ENCODE measurements at regions of chr12 and their contacts with region 1.

Region 1: DNA sequence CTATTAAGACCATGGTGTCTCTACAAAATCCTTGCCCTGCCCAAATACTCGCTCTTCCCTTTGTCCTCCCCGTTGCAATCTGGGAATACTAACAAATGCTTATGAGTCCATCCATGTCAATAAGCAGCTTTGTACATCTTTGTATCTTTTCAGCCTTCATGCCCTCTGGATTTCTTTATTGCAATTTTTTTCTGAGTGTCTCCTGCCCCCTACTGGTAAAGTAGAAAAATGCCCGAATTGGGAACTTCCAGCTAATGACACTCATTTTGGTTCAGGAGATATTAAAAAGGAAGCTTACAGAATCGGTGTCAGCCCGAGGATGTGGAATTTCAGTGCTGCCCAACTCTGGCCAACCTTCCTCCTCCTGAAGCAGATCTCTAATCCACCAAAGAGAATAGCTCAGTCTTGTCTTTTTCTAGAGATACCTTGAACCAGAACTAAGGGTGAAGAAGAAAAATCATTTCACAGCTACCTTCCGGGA is 46.0 kb downstream of the SH2B3 start:
- DNase-seq: peak; percentile 26
- H3K27ac ChIP-seq: no peak overlapping the region
- CTCF ChIP-seq: peak; percentile 75

Region 2: GRCh38 chr12:111330800-111331752 is 120.6 kb before region 1 on chr12:
- CTCF ChIA-PET with region 1: interaction called, 12 read pairs
- POLR2A ChIA-PET with region 1: interaction called, 3 read pairs
- DNase-seq: peak; percentile 59
- H3K27ac ChIP-seq: no peak overlapping the region
- CTCF ChIP-seq: peak; percentile 51

Region 3: DNA sequence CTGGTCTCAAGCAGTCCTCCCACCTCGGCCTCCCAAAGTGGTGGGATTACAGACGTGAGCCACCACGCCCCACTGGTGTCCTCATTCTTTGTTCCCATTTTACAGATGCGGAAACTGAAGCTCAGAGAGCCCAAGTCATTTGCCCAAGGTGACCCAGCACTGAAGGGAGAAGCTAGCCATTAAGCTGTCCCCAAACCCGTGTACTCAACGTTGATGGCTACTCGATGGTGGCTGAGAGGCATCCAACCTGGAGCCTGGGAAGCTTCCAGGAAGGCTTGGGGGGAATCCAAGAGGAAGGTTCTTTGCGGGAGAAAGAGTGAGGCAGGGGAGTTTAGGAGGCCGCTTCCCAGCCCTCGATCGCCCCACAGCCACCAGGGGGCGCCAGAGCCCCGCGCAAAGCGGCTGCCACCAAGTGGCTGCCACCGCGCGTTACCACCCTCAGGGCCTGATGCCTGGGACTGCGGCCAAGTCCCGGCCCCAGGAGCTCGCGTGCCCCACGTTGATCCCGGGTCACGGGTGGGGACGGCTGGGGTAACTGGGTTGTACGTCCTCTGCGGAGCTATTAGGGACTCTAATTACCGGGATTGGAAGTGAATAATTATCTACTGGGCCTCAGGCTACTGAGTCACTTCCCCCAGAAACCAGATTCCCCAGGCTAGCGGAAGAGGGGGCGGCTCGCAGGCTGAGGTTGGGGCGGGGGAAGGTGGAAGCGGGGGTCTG is 54.8 kb before region 1 on chr12:
- CTCF ChIA-PET with region 1: interaction called, 33 read pairs
- POLR2A ChIA-PET with region 1: no interaction called
- DNase-seq: peak; percentile 93
- H3K27ac ChIP-seq: peak overlapping the region; percentile 77
- CTCF ChIP-seq: peak; percentile 97

Region 4: GRCh38 chr12:111405149-111405860 is 46.4 kb before region 1 on chr12:
- CTCF ChIA-PET with region 1: interaction called, 12 read pairs
- POLR2A ChIA-PET with region 1: no interaction called
- DNase-seq: peak; percentile 93
- H3K27ac ChIP-seq: peak overlapping the region; percentile 75
- CTCF ChIP-seq: peak; percentile 40

Region 5: GRCh38 chr12:111412007-111412829 is 39.5 kb before region 1 on chr12:
- CTCF ChIA-PET with region 1: interaction called, 16 read pairs
- POLR2A ChIA-PET with region 1: no interaction called
- DNase-seq: no peak
- H3K27ac ChIP-seq: peak overlapping the region; percentile 69
- CTCF ChIP-seq: no peak

Measured in RWPE1 (cell line).